Right ventricle myocardium inferior (tissue), 1 donor: ENCODE measurements at regions of chrX and their contacts with region 1.

Region 1: GRCh38 chrX:138128027-138128671 is 562.2 kb downstream of the ZIC3 start:
- DNase-seq: no peak
- ATAC-seq: no peak

Region 2: DNA sequence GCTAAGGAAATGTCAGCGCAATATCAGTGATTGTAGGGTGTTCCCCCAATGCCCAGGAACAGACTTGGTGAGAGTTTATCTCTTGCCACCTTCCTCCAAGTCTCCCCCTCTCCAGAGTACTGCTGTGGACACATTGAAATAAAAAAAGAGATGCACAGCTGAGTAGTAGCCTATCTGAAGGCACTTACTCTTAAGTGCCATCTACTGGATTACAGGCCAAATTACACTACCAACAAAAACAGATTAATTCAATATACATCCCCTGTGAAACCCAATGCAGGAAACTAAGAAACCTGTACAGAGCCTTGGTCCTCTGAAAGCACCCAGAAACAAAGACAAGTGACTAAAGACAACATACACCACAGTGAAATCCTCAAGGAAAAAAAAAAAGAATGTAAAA is 101.9 kb before region 1 on chrX:
- intact Hi-C with region 1: no loop called
- DNase-seq: no peak
- ATAC-seq: no peak

Region 3: GRCh38 chrX:138745196-138745595 is 617.0 kb after region 1 on chrX:
- intact Hi-C with region 1: loop called (anchors 5 kb)
- DNase-seq: no peak
- ATAC-seq: no peak